ENCODE measurements at regions of chr2 and their contacts with region 1.

Region 1: GRCh38 chr2:215454519-215455246 is 18.8 kb upstream of the FN1 start:
- DNase-seq: peak; percentile 62
- H3K4me3 ChIP-seq: no peak overlapping the region
- H3K27ac ChIP-seq: no peak overlapping the region
- H3K4me1 ChIP-seq: peaks cover 14% of the 10 kb centered on the region
- H3K27me3 ChIP-seq: no peaks in the 10 kb centered on the region
- CTCF ChIP-seq: peak; percentile 85

Region 2: GRCh38 chr2:215435809-215436704 is 18.6 kb before region 1 on chr2 and contains the start of gene FN1:
- CTCF ChIA-PET with region 1: no interaction called
- POLR2A ChIA-PET with region 1: interaction called, 12 read pairs
- intact Hi-C with region 1: no loop called
- DNase-seq: peak; percentile 96
- H3K4me3 ChIP-seq: peak within 1 kb of the TSS; percentile 88
- H3K27ac ChIP-seq: peak within 1 kb of the TSS; percentile 96
- H3K4me1 ChIP-seq: peaks cover 28% of the 10 kb centered on the region
- H3K27me3 ChIP-seq: no peaks in the 10 kb centered on the region
- CTCF ChIP-seq: no peak
- total RNA-seq, gene FN1: 1,570 and 2,058 TPM in 2 replicates

Region 3: GRCh38 chr2:215677481-215677880 is 222.8 kb after region 1 on chr2:
- CTCF ChIA-PET with region 1: no interaction called
- POLR2A ChIA-PET with region 1: no interaction called
- intact Hi-C with region 1: loop called (anchors 10 kb)
- DNase-seq: no peak
- H3K4me3 ChIP-seq: no peak overlapping the region
- H3K27ac ChIP-seq: no peak overlapping the region
- H3K4me1 ChIP-seq: peaks cover 13% of the 10 kb centered on the region
- H3K27me3 ChIP-seq: no peaks in the 10 kb centered on the region
- CTCF ChIP-seq: no peak

Region 4: GRCh38 chr2:215784371-215784783 is 329.7 kb after region 1 on chr2:
- CTCF ChIA-PET with region 1: no interaction called
- POLR2A ChIA-PET with region 1: no interaction called
- intact Hi-C with region 1: loop called (anchors 5 kb)
- DNase-seq: peak; percentile 95
- H3K4me3 ChIP-seq: no peak overlapping the region
- H3K27ac ChIP-seq: peak overlapping the region; percentile 88
- H3K4me1 ChIP-seq: peaks cover 74% of the 10 kb centered on the region
- H3K27me3 ChIP-seq: no peaks in the 10 kb centered on the region
- CTCF ChIP-seq: no peak

Region 5: GRCh38 chr2:215828517-215829184 is 374.0 kb after region 1 on chr2:
- CTCF ChIA-PET with region 1: no interaction called
- POLR2A ChIA-PET with region 1: no interaction called
- intact Hi-C with region 1: loop called (anchors 5 kb)
- DNase-seq: peak; percentile 80
- H3K4me3 ChIP-seq: no peak overlapping the region
- H3K27ac ChIP-seq: no peak overlapping the region
- H3K4me1 ChIP-seq: peaks cover 18% of the 10 kb centered on the region
- H3K27me3 ChIP-seq: no peaks in the 10 kb centered on the region
- CTCF ChIP-seq: peak; percentile 73

Region 6: DNA sequence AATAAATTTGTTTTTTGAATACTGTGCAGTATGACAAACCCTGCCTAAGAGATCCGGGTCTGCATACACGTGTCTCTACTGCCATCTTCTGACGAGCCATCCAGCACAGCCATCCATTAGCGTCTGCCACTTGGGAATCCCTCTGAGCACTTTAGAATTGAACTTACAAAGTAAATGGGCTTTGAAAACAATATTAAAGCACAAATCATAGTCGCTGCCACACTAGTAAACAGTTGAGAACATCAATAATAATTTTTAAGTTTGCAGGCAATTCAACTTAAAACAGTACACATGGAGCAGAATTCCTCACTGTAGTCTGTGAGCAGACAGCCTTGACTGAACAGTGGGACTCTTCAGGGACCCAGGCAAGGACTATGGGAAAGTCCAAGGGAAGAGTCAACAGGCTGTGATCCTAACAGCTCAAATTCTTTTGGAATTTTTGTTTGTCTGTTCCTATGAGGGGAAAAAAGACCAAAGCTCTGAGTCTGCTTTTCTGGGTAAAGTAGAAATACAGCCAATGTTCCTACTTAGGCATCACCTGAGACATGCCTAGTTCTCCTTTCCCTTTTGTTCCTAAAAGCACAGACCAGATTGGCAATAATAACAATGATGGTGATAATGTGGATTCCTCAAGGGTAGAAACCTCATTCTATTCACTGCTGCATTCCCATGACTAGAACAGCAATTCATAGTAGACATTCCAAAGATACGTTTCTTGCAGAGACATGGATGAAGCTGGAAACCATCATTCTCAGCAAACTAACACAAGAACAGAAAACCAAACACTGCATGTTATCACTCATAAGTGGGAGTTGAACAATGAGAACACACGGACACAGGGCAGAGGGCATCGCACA is 465.8 kb after region 1 on chr2:
- CTCF ChIA-PET with region 1: no interaction called
- POLR2A ChIA-PET with region 1: no interaction called
- intact Hi-C with region 1: loop called (anchors 5 kb)
- DNase-seq: peak; percentile 89
- H3K4me3 ChIP-seq: no peak overlapping the region
- H3K27ac ChIP-seq: peak overlapping the region; percentile 81
- H3K4me1 ChIP-seq: peaks cover 26% of the 10 kb centered on the region
- H3K27me3 ChIP-seq: no peaks in the 10 kb centered on the region
- CTCF ChIP-seq: peak; percentile 92

Measured in A673 (cell line).